ENCODE measurements at regions of chr1 and their contacts with region 1.

Region 1: GRCh38 chr1:50968158-50968820 is 1.8 kb upstream of the CDKN2C start:
- DNase-seq: peak; percentile 85 to 87 (median 87)
- H3K4me3 ChIP-seq: peak overlapping the region; percentile 62 to 91
- H3K4me3 Mint-ChIP-seq: peak overlapping the region; percentile 93 to 100 (median 98)
- H3K27ac ChIP-seq: peak overlapping the region; percentile 76
- H3K27ac Mint-ChIP-seq: peak overlapping the region; percentile 90 to 97 (median 96)
- H3K4me1 ChIP-seq: peaks cover 31% of the 10 kb centered on the region
- H3K4me1 Mint-ChIP-seq: peaks cover 9 to 30% (median 23%) of the 10 kb centered on the region in 4 donors
- H3K27me3 ChIP-seq: no peaks in the 10 kb centered on the region
- H3K27me3 Mint-ChIP-seq: no peaks in the 10 kb centered on the region

Region 2: GRCh38 chr1:50735443-50735842 is 232.8 kb before region 1 on chr1:
- CTCF ChIA-PET with region 1: no interaction called
- POLR2A ChIA-PET with region 1: no interaction called
- intact Hi-C with region 1: no loop called
- DNase-seq: no peak
- H3K4me3 ChIP-seq: no peak overlapping the region
- H3K4me3 Mint-ChIP-seq: no peak overlapping the region
- H3K27ac ChIP-seq: no peak overlapping the region
- H3K27ac Mint-ChIP-seq: no peak overlapping the region
- H3K4me1 ChIP-seq: peaks cover 6% of the 10 kb centered on the region
- H3K4me1 Mint-ChIP-seq: peaks cover 3 to 22% (median 12%) of the 10 kb centered on the region in 4 donors
- H3K27me3 ChIP-seq: no peaks in the 10 kb centered on the region
- H3K27me3 Mint-ChIP-seq: no peaks in the 10 kb centered on the region

Region 3: GRCh38 chr1:50929376-50929958 is 38.8 kb before region 1 on chr1:
- CTCF ChIA-PET with region 1: interaction called, 16 read pairs
- POLR2A ChIA-PET with region 1: interaction called, 4 read pairs
- intact Hi-C with region 1: loop called (anchors 1 kb)
- DNase-seq: peak in 4 of 5 donors; percentile 22 to 36 (median 28)
- H3K4me3 ChIP-seq: no peak overlapping the region
- H3K4me3 Mint-ChIP-seq: no peak overlapping the region
- H3K27ac ChIP-seq: no peak overlapping the region
- H3K27ac Mint-ChIP-seq: no peak overlapping the region
- H3K4me1 ChIP-seq: no peaks in the 10 kb centered on the region
- H3K4me1 Mint-ChIP-seq: peaks cover 19 to 31% (median 26%) of the 10 kb centered on the region in 4 donors
- H3K27me3 ChIP-seq: no peaks in the 10 kb centered on the region
- H3K27me3 Mint-ChIP-seq: no peaks in the 10 kb centered on the region

Region 4: GRCh38 chr1:50955116-50955515 is 13.2 kb before region 1 on chr1:
- CTCF ChIA-PET with region 1: interaction called, 9 read pairs
- POLR2A ChIA-PET with region 1: interaction called, 122 read pairs
- intact Hi-C with region 1: loop called (anchors 1 kb)
- DNase-seq: no peak
- H3K4me3 ChIP-seq: no peak overlapping the region
- H3K4me3 Mint-ChIP-seq: no peak overlapping the region
- H3K27ac ChIP-seq: no peak overlapping the region
- H3K27ac Mint-ChIP-seq: no peak overlapping the region
- H3K4me1 ChIP-seq: peaks cover 8% of the 10 kb centered on the region
- H3K4me1 Mint-ChIP-seq: peaks cover 18 to 27% (median 24%) of the 10 kb centered on the region in 4 donors
- H3K27me3 ChIP-seq: no peaks in the 10 kb centered on the region
- H3K27me3 Mint-ChIP-seq: no peaks in the 10 kb centered on the region

Region 5: GRCh38 chr1:50978144-50978851 is 10.0 kb after region 1 on chr1:
- CTCF ChIA-PET with region 1: interaction called, 25 read pairs
- POLR2A ChIA-PET with region 1: interaction called, 88 read pairs
- intact Hi-C with region 1: loop called (anchors 1 kb)
- DNase-seq: peak in 4 of 5 donors; percentile 22 to 52 (median 34)
- H3K4me3 ChIP-seq: peak overlapping the region; percentile 42 to 69
- H3K4me3 Mint-ChIP-seq: peak overlapping the region; percentile 86 to 92 (median 88)
- H3K27ac ChIP-seq: peak overlapping the region; percentile 67
- H3K27ac Mint-ChIP-seq: peak overlapping the region in 6 of 7 donors; percentile 43 to 90 (median 84)
- H3K4me1 ChIP-seq: peaks cover 23% of the 10 kb centered on the region
- H3K4me1 Mint-ChIP-seq: peaks cover 16 to 34% (median 21%) of the 10 kb centered on the region in 4 donors
- H3K27me3 ChIP-seq: no peaks in the 10 kb centered on the region
- H3K27me3 Mint-ChIP-seq: peaks cover 0 to 5% of the 10 kb centered on the region in 2 donors

Region 6: GRCh38 chr1:50995651-50996050 is 27.4 kb after region 1 on chr1:
- CTCF ChIA-PET with region 1: no interaction called
- POLR2A ChIA-PET with region 1: no interaction called
- intact Hi-C with region 1: no loop called
- DNase-seq: no peak
- H3K4me3 ChIP-seq: no peak overlapping the region
- H3K4me3 Mint-ChIP-seq: no peak overlapping the region
- H3K27ac ChIP-seq: no peak overlapping the region
- H3K27ac Mint-ChIP-seq: no peak overlapping the region
- H3K4me1 ChIP-seq: no peaks in the 10 kb centered on the region
- H3K4me1 Mint-ChIP-seq: no peaks in the 10 kb centered on the region
- H3K27me3 ChIP-seq: no peaks in the 10 kb centered on the region
- H3K27me3 Mint-ChIP-seq: peaks cover 0 to 5% of the 10 kb centered on the region in 2 donors

Region 7: GRCh38 chr1:51044834-51045233 is 76.5 kb after region 1 on chr1:
- CTCF ChIA-PET with region 1: no interaction called
- POLR2A ChIA-PET with region 1: no interaction called
- intact Hi-C with region 1: loop called (anchors 2 kb)
- DNase-seq: peak in 1 of 5 donors; percentile 9
- H3K4me3 ChIP-seq: no peak overlapping the region
- H3K4me3 Mint-ChIP-seq: no peak overlapping the region
- H3K27ac ChIP-seq: no peak overlapping the region
- H3K27ac Mint-ChIP-seq: no peak overlapping the region
- H3K4me1 ChIP-seq: no peaks in the 10 kb centered on the region
- H3K4me1 Mint-ChIP-seq: peaks cover 0 to 2% (median under 1%) of the 10 kb centered on the region in 4 donors
- H3K27me3 ChIP-seq: no peaks in the 10 kb centered on the region
- H3K27me3 Mint-ChIP-seq: peaks cover 13 to 18% of the 10 kb centered on the region in 2 donors

Region 8: GRCh38 chr1:51235673-51236530 is 267.6 kb after region 1 on chr1 and contains the start of gene RNF11:
- CTCF ChIA-PET with region 1: no interaction called
- POLR2A ChIA-PET with region 1: interaction called, 4 read pairs
- intact Hi-C with region 1: loop called (anchors 5 kb)
- DNase-seq: peak; percentile 90 to 94 (median 94)
- H3K4me3 ChIP-seq: peak within 1 kb of the TSS; percentile 91 to 93
- H3K4me3 Mint-ChIP-seq: peak within 1 kb of the TSS; percentile 94 to 99 (median 98)
- H3K27ac ChIP-seq: peak within 1 kb of the TSS; percentile 81
- H3K27ac Mint-ChIP-seq: peak within 1 kb of the TSS; percentile 87 to 100 (median 99)
- H3K4me1 ChIP-seq: peaks cover 52% of the 10 kb centered on the region
- H3K4me1 Mint-ChIP-seq: peaks cover 15 to 40% (median 32%) of the 10 kb centered on the region in 4 donors
- H3K27me3 ChIP-seq: no peaks in the 10 kb centered on the region
- H3K27me3 Mint-ChIP-seq: no peaks in the 10 kb centered on the region
- total RNA-seq, gene RNF11: 40.8 to 43.4 TPM

Measured in CD4-positive, alpha-beta memory T cell (primary cell).